Naive thymus-derived CD4-positive, alpha-beta T cell (primary cell): ENCODE measurements at regions of chr2 and their contacts with region 1.

Region 1: GRCh38 chr2:30336978-30337841 is 105.9 kb downstream of the LBH start:
- DNase-seq: peak; percentile 11 to 74 (median 69)
- ATAC-seq: peak; percentile 89
- H3K4me3 ChIP-seq: peak overlapping the region; percentile 46
- H3K4me3 Mint-ChIP-seq: peak overlapping the region; percentile 69 to 92 (median 85)
- H3K27ac ChIP-seq: peak overlapping the region; percentile 71
- H3K27ac Mint-ChIP-seq: peak overlapping the region; percentile 95 to 100 (median 98)
- H3K4me1 ChIP-seq: peaks cover 60 to 71% of the 10 kb centered on the region in 2 donors
- H3K4me1 Mint-ChIP-seq: peaks cover 57 to 87% (median 84%) of the 10 kb centered on the region in 7 donors
- H3K27me3 ChIP-seq: no peaks in the 10 kb centered on the region
- H3K27me3 Mint-ChIP-seq: no peaks in the 10 kb centered on the region

Region 2: DNA sequence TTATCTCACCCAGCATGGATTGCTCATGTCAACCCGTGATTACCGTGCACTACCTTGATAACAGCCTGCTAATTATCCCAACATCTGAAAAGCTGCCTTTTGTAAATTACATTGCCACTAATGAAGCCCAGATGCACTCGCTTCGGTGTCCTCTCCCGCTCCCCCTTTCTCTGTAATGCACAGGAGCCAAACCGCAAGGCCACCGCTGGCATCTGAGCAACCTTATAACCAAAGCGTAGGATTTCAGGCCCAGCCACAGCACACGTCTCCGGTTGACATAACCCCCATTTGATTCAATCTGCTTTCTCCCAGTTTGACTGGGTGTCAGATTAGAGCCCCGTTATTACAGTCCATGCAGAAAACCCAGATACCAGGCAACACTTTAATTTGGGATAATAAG is 757.0 kb before region 1 on chr2:
- CTCF ChIA-PET with region 1: no interaction called
- POLR2A ChIA-PET with region 1: no interaction called
- intact Hi-C with region 1: no loop called
- DNase-seq: no peak
- ATAC-seq: no peak
- H3K4me3 ChIP-seq: no peak overlapping the region
- H3K4me3 Mint-ChIP-seq: no peak overlapping the region
- H3K27ac ChIP-seq: no peak overlapping the region
- H3K27ac Mint-ChIP-seq: no peak overlapping the region
- H3K4me1 ChIP-seq: no peaks in the 10 kb centered on the region
- H3K4me1 Mint-ChIP-seq: no peaks in the 10 kb centered on the region
- H3K27me3 ChIP-seq: no peaks in the 10 kb centered on the region
- H3K27me3 Mint-ChIP-seq: peaks cover 0 to 15% (median 0%) of the 10 kb centered on the region in 5 donors

Region 3: GRCh38 chr2:30231212-30231995 is 105.8 kb before region 1 on chr2 and contains the start of gene LBH:
- CTCF ChIA-PET with region 1: interaction called, 32 read pairs
- POLR2A ChIA-PET with region 1: interaction called, 192 read pairs
- intact Hi-C with region 1: loop called (anchors 1 kb)
- DNase-seq: peak; percentile 74 to 92 (median 88)
- ATAC-seq: peak; percentile 72
- H3K4me3 ChIP-seq: peak within 1 kb of the TSS; percentile 75
- H3K4me3 Mint-ChIP-seq: peak within 1 kb of the TSS; percentile 87 to 98 (median 94)
- H3K27ac ChIP-seq: peak within 1 kb of the TSS; percentile 97
- H3K27ac Mint-ChIP-seq: peak within 1 kb of the TSS; percentile 87 to 100 (median 96)
- H3K4me1 ChIP-seq: peaks cover 49 to 55% of the 10 kb centered on the region in 2 donors
- H3K4me1 Mint-ChIP-seq: peaks cover 26 to 65% (median 57%) of the 10 kb centered on the region in 7 donors
- H3K27me3 ChIP-seq: no peaks in the 10 kb centered on the region
- H3K27me3 Mint-ChIP-seq: peaks cover 0 to 8% (median 0%) of the 10 kb centered on the region in 5 donors
- total RNA-seq, gene LBH: 146 to 517 (median 192) TPM

Region 4: DNA sequence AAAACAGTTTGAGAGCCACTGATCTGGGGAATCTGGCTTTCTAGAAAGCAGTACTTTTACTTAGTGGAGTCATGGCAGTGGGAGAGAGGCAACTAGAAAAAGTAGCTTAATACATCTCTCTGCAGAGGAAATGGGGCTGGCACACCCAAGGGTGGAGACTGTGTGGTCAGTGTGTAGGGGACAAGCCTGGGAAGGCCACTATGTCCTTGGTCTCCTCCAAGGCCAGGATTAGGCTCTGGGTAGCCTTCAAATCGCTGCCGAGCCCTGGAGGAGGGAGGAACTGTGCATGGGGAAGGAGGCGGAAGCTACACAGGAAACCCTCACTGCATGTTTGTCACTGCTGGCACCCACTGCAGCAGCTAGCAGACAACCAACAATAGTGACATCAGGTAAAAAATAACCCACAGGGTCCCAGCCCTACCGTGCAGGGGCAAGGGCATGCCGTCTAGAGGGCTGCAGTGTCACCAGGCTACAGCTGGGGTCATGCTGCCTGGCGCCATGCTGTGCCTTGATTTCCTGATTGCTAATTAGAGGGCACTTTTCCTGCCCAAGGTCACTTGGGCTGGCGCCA is 71.1 kb before region 1 on chr2:
- CTCF ChIA-PET with region 1: interaction called, 11 read pairs
- POLR2A ChIA-PET with region 1: interaction called, 110 read pairs
- intact Hi-C with region 1: loop called (anchors 1 kb)
- DNase-seq: peak; percentile 25 to 80 (median 75)
- ATAC-seq: peak; percentile 95
- H3K4me3 ChIP-seq: peak overlapping the region; percentile 44
- H3K4me3 Mint-ChIP-seq: peak overlapping the region; percentile 68 to 92 (median 84)
- H3K27ac ChIP-seq: peak overlapping the region; percentile 82
- H3K27ac Mint-ChIP-seq: peak overlapping the region; percentile 89 to 100 (median 97)
- H3K4me1 ChIP-seq: peaks cover 46 to 65% of the 10 kb centered on the region in 2 donors
- H3K4me1 Mint-ChIP-seq: peaks cover 44 to 94% (median 86%) of the 10 kb centered on the region in 7 donors
- H3K27me3 ChIP-seq: no peaks in the 10 kb centered on the region
- H3K27me3 Mint-ChIP-seq: no peaks in the 10 kb centered on the region

Region 5: DNA sequence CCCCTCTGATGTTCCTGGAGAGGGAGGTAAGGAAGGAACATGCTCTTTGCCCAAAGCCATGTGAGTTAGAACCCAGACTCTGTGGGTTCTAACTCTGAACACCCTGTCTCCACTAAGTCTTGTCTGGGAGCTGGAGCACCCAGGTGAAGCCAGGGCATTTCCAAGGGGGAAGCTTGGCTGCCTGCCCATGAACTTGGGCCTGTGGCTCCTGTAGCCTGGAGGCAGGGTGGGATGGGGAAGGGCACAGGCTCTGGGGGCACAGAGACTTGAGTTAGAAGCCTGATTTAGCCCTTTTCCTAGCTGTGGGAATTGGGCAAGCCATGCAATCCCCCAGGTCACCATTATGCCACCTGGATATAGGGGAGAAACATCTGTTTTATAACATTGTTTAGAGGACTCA is 40.7 kb before region 1 on chr2:
- CTCF ChIA-PET with region 1: no interaction called
- POLR2A ChIA-PET with region 1: no interaction called
- intact Hi-C with region 1: no loop called
- DNase-seq: no peak
- ATAC-seq: no peak
- H3K4me3 ChIP-seq: no peak overlapping the region
- H3K4me3 Mint-ChIP-seq: no peak overlapping the region
- H3K27ac ChIP-seq: no peak overlapping the region
- H3K27ac Mint-ChIP-seq: no peak overlapping the region
- H3K4me1 ChIP-seq: no peaks in the 10 kb centered on the region
- H3K4me1 Mint-ChIP-seq: peaks cover 0 to 24% (median 11%) of the 10 kb centered on the region in 7 donors
- H3K27me3 ChIP-seq: no peaks in the 10 kb centered on the region
- H3K27me3 Mint-ChIP-seq: no peaks in the 10 kb centered on the region

Region 6: GRCh38 chr2:30321466-30321865 is 15.7 kb before region 1 on chr2:
- CTCF ChIA-PET with region 1: interaction called, 4 read pairs
- POLR2A ChIA-PET with region 1: interaction called, 10 read pairs
- intact Hi-C with region 1: no loop called
- DNase-seq: no peak
- ATAC-seq: no peak
- H3K4me3 ChIP-seq: no peak overlapping the region
- H3K4me3 Mint-ChIP-seq: no peak overlapping the region
- H3K27ac ChIP-seq: no peak overlapping the region
- H3K27ac Mint-ChIP-seq: peak overlapping the region in 3 of 9 donors; percentile 25 to 44 (median 38)
- H3K4me1 ChIP-seq: peaks cover 0 to 16% of the 10 kb centered on the region in 2 donors
- H3K4me1 Mint-ChIP-seq: peaks cover 16 to 61% (median 53%) of the 10 kb centered on the region in 7 donors
- H3K27me3 ChIP-seq: no peaks in the 10 kb centered on the region
- H3K27me3 Mint-ChIP-seq: no peaks in the 10 kb centered on the region

Region 7: GRCh38 chr2:30447149-30448045 is 110.2 kb after region 1 on chr2 and contains the start of gene LCLAT1:
- CTCF ChIA-PET with region 1: interaction called, 4 read pairs
- POLR2A ChIA-PET with region 1: interaction called, 14 read pairs
- intact Hi-C with region 1: loop called (anchors 1 kb)
- DNase-seq: peak; percentile 72 to 91 (median 86)
- ATAC-seq: peak; percentile 89
- H3K4me3 ChIP-seq: peak within 1 kb of the TSS; percentile 89
- H3K4me3 Mint-ChIP-seq: peak within 1 kb of the TSS; percentile 86 to 97 (median 95)
- H3K27ac ChIP-seq: peak within 1 kb of the TSS; percentile 91
- H3K27ac Mint-ChIP-seq: peak within 1 kb of the TSS; percentile 92 to 99 (median 97)
- H3K4me1 ChIP-seq: peaks cover 10 to 18% of the 10 kb centered on the region in 2 donors
- H3K4me1 Mint-ChIP-seq: peaks cover 23 to 56% (median 48%) of the 10 kb centered on the region in 7 donors
- H3K27me3 ChIP-seq: no peaks in the 10 kb centered on the region
- H3K27me3 Mint-ChIP-seq: no peaks in the 10 kb centered on the region
- total RNA-seq, gene LCLAT1: 18.2 to 25.2 (median 22.2) TPM

Region 8: DNA sequence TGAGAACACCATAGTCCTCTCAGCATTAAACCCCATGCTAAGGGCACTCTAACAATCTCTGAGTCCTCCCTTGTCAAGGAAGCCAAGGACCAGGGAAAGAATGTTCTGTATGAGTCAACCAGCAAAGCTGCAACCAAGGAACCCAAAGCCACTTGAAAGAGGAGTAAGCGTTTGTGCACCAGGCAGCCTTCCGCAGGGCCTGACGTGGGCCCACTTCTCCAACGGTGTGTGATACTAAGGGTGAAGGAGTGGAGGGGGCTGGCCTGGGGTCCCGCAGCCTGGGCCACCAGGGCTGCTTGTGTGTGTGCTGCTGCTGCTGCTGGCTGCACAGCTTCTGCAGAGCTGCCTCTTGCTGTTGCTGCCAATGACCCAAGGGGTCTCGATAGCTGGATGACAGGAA is 831.1 kb after region 1 on chr2:
- CTCF ChIA-PET with region 1: no interaction called
- POLR2A ChIA-PET with region 1: no interaction called
- intact Hi-C with region 1: no loop called
- DNase-seq: no peak
- ATAC-seq: no peak
- H3K4me3 ChIP-seq: no peak overlapping the region
- H3K4me3 Mint-ChIP-seq: no peak overlapping the region
- H3K27ac ChIP-seq: no peak overlapping the region
- H3K27ac Mint-ChIP-seq: no peak overlapping the region
- H3K4me1 ChIP-seq: no peaks in the 10 kb centered on the region
- H3K4me1 Mint-ChIP-seq: peaks cover 0 to 6% (median 0%) of the 10 kb centered on the region in 7 donors
- H3K27me3 ChIP-seq: no peaks in the 10 kb centered on the region
- H3K27me3 Mint-ChIP-seq: peaks cover 4 to 11% (median 6%) of the 10 kb centered on the region in 5 donors

Region 9: GRCh38 chr2:31312898-31313297 is 975.7 kb after region 1 on chr2:
- CTCF ChIA-PET with region 1: no interaction called
- POLR2A ChIA-PET with region 1: no interaction called
- intact Hi-C with region 1: no loop called
- DNase-seq: no peak
- ATAC-seq: no peak
- H3K4me3 ChIP-seq: no peak overlapping the region
- H3K4me3 Mint-ChIP-seq: no peak overlapping the region
- H3K27ac ChIP-seq: no peak overlapping the region
- H3K27ac Mint-ChIP-seq: no peak overlapping the region
- H3K4me1 ChIP-seq: peaks cover 11% of the 10 kb centered on the region in 2 donors
- H3K4me1 Mint-ChIP-seq: peaks cover 10 to 19% (median 13%) of the 10 kb centered on the region in 7 donors
- H3K27me3 ChIP-seq: no peaks in the 10 kb centered on the region
- H3K27me3 Mint-ChIP-seq: peaks cover 12 to 45% (median 22%) of the 10 kb centered on the region in 5 donors